ENCODE measurements at regions of chr2 and their contacts with region 1.

Region 1: GRCh38 chr2:119366649-119367471 is at the starts of genes C2orf76 and DBI:
- DNase-seq: peak; percentile 97
- ATAC-seq: peak; percentile 98
- total RNA-seq, gene C2orf76: 6.8 TPM
- total RNA-seq, gene DBI: 299 TPM

Region 2: GRCh38 chr2:119208791-119209203 is 158.1 kb before region 1 on chr2:
- intact Hi-C with region 1: no loop called
- DNase-seq: no peak
- ATAC-seq: no peak

Region 3: GRCh38 chr2:119255760-119256581 is 110.9 kb before region 1 on chr2:
- intact Hi-C with region 1: no loop called
- DNase-seq: no peak
- ATAC-seq: no peak

Region 4: DNA sequence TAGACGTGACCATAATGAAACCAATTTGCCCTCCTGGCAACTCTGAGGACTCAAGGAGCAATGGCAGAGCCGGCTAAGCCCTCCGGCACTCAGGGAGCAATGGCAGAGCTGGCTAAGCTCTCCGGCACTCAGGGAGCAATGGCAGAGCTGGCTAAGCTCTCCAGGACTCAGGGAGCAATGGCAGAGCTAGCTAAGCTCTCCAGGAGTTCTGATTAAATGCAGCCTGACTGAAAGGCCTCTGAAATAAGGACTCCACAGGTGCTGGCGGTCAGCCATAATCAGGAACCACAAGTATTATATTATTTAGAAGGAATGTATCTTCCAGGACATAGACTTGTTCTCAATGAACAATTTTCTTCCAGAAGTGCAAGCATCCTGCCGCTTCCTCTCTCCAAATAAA is 65.4 kb before region 1 on chr2:
- intact Hi-C with region 1: no loop called
- DNase-seq: peak; percentile 27
- ATAC-seq: no peak

Region 5: GRCh38 chr2:119387381-119388129 is 20.7 kb after region 1 on chr2:
- intact Hi-C with region 1: loop called (anchors 1 kb)
- DNase-seq: peak; percentile 81
- ATAC-seq: peak; percentile 85